Activated T-helper 2 cell treated with anti-CD3 and anti-CD28 coated beads, Interferon-gamma antibody, Interleukin-2, Interleukin-4, amounts not matched to agents 10 μg/mL and 5 μg/mL and 100 μg/mL, durations not matched to agents 14 hours and 24 hours and 36 hours (primary cell): ENCODE measurements at regions of chr1 and their contacts with region 1.

Region 1: DNA sequence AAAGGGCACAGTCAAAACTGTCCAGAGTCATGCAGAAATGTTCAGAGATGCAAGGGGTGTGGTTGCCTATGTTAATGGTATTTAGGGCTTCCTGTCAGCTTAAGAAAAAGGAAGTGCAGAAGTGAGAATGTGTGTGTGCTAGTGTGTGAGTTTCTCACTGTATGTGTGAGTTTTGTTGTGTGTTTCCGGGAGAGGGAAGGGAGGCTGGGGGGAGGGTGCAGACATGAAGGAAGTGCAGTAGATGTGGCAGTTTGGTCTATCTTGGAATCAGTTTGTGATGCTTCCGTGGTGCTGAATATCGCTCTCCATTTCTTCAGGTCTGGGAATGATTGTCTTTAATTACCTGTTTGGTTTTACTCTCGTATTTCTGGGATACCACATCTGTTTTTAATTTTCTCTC is 16.5 kb upstream of the ATP6V1G3 start:
- DNase-seq: peak; percentile 54
- H3K4me3 Mint-ChIP-seq: peak overlapping the region; percentile 63
- H3K27ac Mint-ChIP-seq: peak overlapping the region; percentile 60
- H3K4me1 Mint-ChIP-seq: peaks cover 41% of the 10 kb centered on the region
- H3K27me3 Mint-ChIP-seq: no peaks in the 10 kb centered on the region

Region 2: DNA sequence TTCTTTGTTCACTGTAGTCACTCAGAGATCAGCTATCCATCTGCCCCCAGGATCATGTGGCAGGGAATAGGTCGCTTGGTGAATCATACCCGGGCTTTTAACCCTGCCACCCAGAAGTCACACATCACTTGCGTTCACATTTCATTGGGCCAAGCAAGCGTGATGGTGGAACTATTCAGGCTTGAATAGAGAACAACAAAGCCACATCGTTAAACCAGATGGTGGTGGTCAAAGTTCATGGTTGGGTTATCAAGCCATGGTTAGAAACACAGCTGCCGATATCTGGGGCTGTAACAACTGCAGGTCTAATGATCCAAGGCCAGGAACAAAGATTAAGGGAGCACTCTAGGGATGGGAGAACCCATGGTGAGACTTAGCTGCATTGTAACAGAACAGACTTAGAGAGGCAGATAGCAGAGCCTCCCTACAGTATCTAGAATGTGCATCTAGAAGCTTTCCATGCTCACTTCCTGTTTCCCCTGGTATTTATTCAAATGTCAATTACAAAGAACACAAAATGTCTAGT is 41.9 kb after region 1 on chr1:
- intact Hi-C with region 1: loop called (anchors 5 kb)
- DNase-seq: no peak
- H3K4me3 Mint-ChIP-seq: no peak overlapping the region
- H3K27ac Mint-ChIP-seq: peak overlapping the region; percentile 77
- H3K4me1 Mint-ChIP-seq: peaks cover 62% of the 10 kb centered on the region
- H3K27me3 Mint-ChIP-seq: no peaks in the 10 kb centered on the region

Region 3: DNA sequence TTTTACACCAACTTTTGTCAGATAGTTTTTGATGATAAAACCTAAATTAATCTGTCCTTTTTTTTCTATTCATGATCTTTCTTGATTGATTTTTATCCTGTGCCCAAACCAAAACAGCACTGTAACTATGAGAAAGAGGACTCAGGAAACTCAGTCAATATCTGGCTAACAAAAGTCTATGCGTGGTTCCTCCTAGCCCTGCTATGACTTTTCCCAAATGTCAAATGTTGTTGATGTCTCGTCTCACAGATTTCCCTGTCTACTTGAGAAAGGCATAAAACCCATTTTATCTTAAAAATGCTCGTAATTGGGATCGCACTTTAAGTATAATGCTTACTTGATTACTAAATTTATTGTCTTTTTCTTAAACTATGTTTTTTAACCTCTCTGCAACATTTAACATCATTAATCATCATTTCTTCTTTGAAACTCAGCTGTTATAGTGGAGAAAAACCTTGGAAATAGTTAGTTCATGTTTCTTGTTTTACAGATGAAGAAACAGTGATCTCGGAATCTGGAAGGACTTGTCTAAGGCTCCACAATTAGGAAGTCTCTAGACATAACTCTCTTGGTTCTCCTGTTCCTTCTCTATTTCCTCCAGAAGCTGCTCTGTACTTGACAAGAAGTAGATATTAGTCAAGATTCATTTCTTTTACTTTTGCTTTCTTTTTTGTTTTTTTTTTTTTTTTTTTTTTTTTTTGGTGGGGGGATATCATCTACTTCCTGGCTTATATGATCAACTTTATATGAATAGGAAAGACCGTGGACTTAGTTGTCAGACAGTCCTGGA is 55.7 kb after region 1 on chr1:
- intact Hi-C with region 1: loop called (anchors 2 kb)
- DNase-seq: no peak
- H3K4me3 Mint-ChIP-seq: peak overlapping the region; percentile 75
- H3K27ac Mint-ChIP-seq: peak overlapping the region; percentile 86
- H3K4me1 Mint-ChIP-seq: peaks cover 59% of the 10 kb centered on the region
- H3K27me3 Mint-ChIP-seq: no peaks in the 10 kb centered on the region

Region 4: GRCh38 chr1:198651650-198652400 is 94.9 kb after region 1 on chr1:
- intact Hi-C with region 1: no loop called
- DNase-seq: no peak
- H3K4me3 Mint-ChIP-seq: peak overlapping the region; percentile 73
- H3K27ac Mint-ChIP-seq: peak overlapping the region; percentile 67
- H3K4me1 Mint-ChIP-seq: peaks cover 70% of the 10 kb centered on the region
- H3K27me3 Mint-ChIP-seq: no peaks in the 10 kb centered on the region